ENCODE measurements at regions of chr12 and their contacts with region 1.

Region 1: GRCh38 chr12:94101738-94102660 is 46.4 kb upstream of the PLXNC1 start:
- DNase-seq: peak; percentile 56
- ATAC-seq: peak; percentile 93
- H3K4me3 ChIP-seq: peak overlapping the region; percentile 78
- H3K27ac ChIP-seq: no peak overlapping the region
- H3K4me1 ChIP-seq: no peaks in the 10 kb centered on the region; the same call in 1 of the 2 replicates
- H3K27me3 ChIP-seq: peaks cover 0 to 2% of the 10 kb centered on the region in 2 experiments; a peak in 2 of 4 replicates
- CTCF ChIP-seq: peak; percentile 79 to 97 (median 82); a peak in 5 of 6 replicates
- EP300 ChIP-seq: no peak
- POLR2A ChIP-seq: no peak
- RAD21 ChIP-seq: peak; percentile 93

Region 2: DNA sequence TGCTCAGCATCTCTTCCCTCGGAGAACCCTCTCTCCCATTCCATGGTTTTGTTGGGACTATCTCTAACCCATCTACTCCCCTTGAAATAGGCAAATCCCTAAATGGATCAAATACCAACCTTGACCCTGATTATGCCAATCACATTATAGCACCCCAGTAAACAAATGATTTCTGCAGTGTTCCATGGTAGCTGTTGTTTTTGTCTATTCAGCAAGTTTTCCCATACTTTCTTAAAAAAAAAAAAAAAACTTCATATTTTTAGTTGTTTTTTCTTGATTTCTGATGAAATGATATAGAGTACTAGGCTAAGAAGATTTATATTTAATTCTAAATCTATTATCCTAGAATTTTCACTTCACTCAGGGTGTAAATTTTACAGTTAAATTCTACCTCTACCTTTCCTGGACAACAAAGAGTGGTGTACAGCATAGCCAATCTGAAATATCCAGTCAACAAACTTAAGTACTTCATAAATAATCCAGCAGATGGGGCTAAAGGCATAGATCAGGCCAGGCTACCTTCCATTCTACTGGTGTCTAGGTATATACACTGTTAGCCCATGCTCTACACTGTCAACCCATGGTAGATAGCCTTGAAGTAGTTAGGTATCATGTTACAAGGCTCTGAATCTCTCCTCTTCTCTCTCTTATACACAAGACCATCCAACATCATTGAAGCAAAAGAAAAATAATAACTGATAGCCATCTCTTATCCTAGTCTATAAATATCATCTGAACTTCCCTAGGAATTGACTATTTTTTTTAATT is 1317.0 kb before region 1 on chr12:
- CTCF ChIA-PET with region 1: interaction called, 10 read pairs
- POLR2A ChIA-PET with region 1: no interaction called
- RAD21 ChIA-PET with region 1: interaction called, 5 read pairs
- SMC1A ChIA-PET with region 1: interaction called, 4 read pairs
- in situ Hi-C with region 1: loop called (anchors 10 kb)
- intact Hi-C with region 1: loop called (anchors 5 kb)
- DNase-seq: peak; percentile 70
- ATAC-seq: peak; percentile 99
- H3K4me3 ChIP-seq: no peak overlapping the region
- H3K27ac ChIP-seq: no peak overlapping the region
- H3K4me1 ChIP-seq: peaks cover 2% of the 10 kb centered on the region; the same call in 1 of the 2 replicates
- H3K27me3 ChIP-seq: no peaks in the 10 kb centered on the region
- CTCF ChIP-seq: peak; percentile 51 to 84 (median 57); a peak in 5 of 6 replicates
- EP300 ChIP-seq: no peak
- POLR2A ChIP-seq: no peak
- RAD21 ChIP-seq: peak; percentile 97

Region 3: GRCh38 chr12:93514853-93515252 is 587.1 kb before region 1 on chr12:
- CTCF ChIA-PET with region 1: interaction called, 18 read pairs
- POLR2A ChIA-PET with region 1: no interaction called
- RAD21 ChIA-PET with region 1: interaction called, 3 read pairs
- SMC1A ChIA-PET with region 1: interaction called, 8 read pairs
- in situ Hi-C with region 1: no loop called
- intact Hi-C with region 1: no loop called
- DNase-seq: no peak
- ATAC-seq: no peak
- H3K4me3 ChIP-seq: no peak overlapping the region
- H3K27ac ChIP-seq: no peak overlapping the region
- H3K4me1 ChIP-seq: no peaks in the 10 kb centered on the region
- H3K27me3 ChIP-seq: no peaks in the 10 kb centered on the region
- CTCF ChIP-seq: no peak
- EP300 ChIP-seq: no peak
- POLR2A ChIP-seq: no peak
- RAD21 ChIP-seq: no peak

Region 4: DNA sequence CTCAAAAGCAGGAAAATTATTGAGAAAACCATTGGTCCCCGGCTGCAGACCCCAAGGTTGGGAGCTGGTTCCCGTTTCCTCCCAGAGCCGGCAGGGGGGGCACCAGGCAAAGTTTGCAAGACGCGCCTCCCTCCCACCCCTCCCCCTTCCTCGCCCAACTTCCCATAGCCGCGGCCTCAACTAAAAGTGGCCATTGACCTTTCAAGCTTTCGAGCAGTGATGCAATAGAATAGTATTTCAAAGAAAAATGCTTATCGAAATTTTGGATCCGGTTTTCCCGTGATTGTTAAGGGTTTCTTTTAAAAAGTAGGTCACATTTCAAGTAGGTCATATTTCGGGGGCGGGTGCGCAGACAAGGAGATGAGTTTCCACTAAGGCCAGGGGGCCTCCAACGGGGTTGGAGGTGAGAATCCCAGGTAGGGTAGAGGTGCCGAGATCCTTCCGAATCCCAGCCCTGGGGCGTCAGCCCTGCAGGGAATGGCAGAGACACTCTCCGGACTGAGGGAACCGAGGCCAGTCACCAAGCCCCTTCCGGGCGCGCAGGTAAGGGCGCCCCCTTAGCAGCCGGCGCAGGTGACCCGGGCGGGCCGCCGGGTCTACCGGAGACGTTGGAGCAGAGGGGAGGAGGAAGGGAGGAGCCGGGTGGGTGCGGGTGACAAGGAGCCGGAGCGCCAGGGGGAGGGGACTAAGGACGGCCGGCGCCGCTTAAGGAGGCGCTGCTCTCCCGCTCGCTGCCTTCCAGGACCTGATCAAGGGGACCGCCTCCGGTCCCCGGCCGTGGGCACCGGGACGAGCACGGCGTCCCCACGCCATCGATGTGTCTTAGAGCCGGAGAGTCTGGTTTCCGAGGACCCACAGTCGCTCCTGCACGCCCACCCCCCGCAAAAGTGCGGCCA is 532.1 kb before region 1 on chr12:
- CTCF ChIA-PET with region 1: interaction called, 148 read pairs
- POLR2A ChIA-PET with region 1: interaction called, 6 read pairs
- RAD21 ChIA-PET with region 1: interaction called, 121 read pairs
- SMC1A ChIA-PET with region 1: interaction called, 85 read pairs
- in situ Hi-C with region 1: loop called (anchors 5 kb)
- intact Hi-C with region 1: loop called (anchors 1 kb)
- DNase-seq: no peak
- ATAC-seq: peak; percentile 73
- H3K4me3 ChIP-seq: peak overlapping the region; percentile 81
- H3K27ac ChIP-seq: no peak overlapping the region
- H3K4me1 ChIP-seq: peaks cover 6% of the 10 kb centered on the region; the same call in 1 of the 2 replicates
- H3K27me3 ChIP-seq: peaks cover 11 to 15% of the 10 kb centered on the region in 2 experiments
- CTCF ChIP-seq: peak; percentile 73 to 92 (median 83)
- EP300 ChIP-seq: no peak
- POLR2A ChIP-seq: no peak
- RAD21 ChIP-seq: peak; percentile 89

Region 5: GRCh38 chr12:93773122-93773871 is 328.7 kb before region 1 on chr12:
- CTCF ChIA-PET with region 1: interaction called, 81 read pairs
- POLR2A ChIA-PET with region 1: no interaction called
- RAD21 ChIA-PET with region 1: no interaction called
- SMC1A ChIA-PET with region 1: interaction called, 46 read pairs
- in situ Hi-C with region 1: loop called (anchors 5 kb)
- intact Hi-C with region 1: no loop called
- DNase-seq: no peak
- ATAC-seq: peak; percentile 31; the same call in 2 of the 3 replicates
- H3K4me3 ChIP-seq: no peak overlapping the region
- H3K27ac ChIP-seq: no peak overlapping the region
- H3K4me1 ChIP-seq: no peaks in the 10 kb centered on the region
- H3K27me3 ChIP-seq: no peaks in the 10 kb centered on the region
- CTCF ChIP-seq: no peak
- EP300 ChIP-seq: no peak
- POLR2A ChIP-seq: no peak
- RAD21 ChIP-seq: no peak

Region 6: DNA sequence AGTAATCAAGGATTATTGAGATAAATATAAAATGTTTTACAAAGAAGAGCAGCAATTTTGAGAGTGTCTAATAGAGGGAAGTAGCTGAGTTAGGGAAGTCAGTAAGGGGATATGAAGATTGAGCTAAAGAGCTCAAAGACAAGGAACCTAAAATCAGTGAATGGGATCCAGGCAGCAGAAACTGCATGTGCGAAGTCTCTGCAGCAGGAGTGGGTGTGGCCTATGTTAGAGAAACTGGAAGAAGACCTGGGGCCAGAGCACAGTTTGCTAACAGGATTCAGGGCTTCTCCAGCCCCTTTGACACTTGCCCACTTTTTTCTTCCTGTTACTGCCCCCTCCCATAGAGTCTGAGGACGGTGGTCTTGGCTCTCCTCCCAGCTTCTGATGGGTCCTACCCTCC is 10.1 kb after region 1 on chr12:
- CTCF ChIA-PET with region 1: interaction called, 27 read pairs
- POLR2A ChIA-PET with region 1: no interaction called
- RAD21 ChIA-PET with region 1: interaction called, 18 read pairs
- SMC1A ChIA-PET with region 1: interaction called, 14 read pairs
- in situ Hi-C with region 1: no loop called
- intact Hi-C with region 1: no loop called
- DNase-seq: no peak
- ATAC-seq: 0 out of 3 replicates have a peak, but pooled peaks have one; percentile 27
- H3K4me3 ChIP-seq: no peak overlapping the region
- H3K27ac ChIP-seq: no peak overlapping the region
- H3K4me1 ChIP-seq: no peaks in the 10 kb centered on the region
- H3K27me3 ChIP-seq: 0 out of 4 replicates have a peak, but pooled peaks cover 0 to 2% of the 10 kb centered on the region in 2 experiments
- CTCF ChIP-seq: no peak
- EP300 ChIP-seq: no peak
- POLR2A ChIP-seq: no peak
- RAD21 ChIP-seq: no peak

Region 7: GRCh38 chr12:94262228-94263010 is 160.4 kb after region 1 on chr12:
- CTCF ChIA-PET with region 1: no interaction called
- POLR2A ChIA-PET with region 1: no interaction called
- RAD21 ChIA-PET with region 1: no interaction called
- SMC1A ChIA-PET with region 1: no interaction called
- in situ Hi-C with region 1: no loop called
- intact Hi-C with region 1: no loop called
- DNase-seq: no peak
- ATAC-seq: peak; percentile 80
- H3K4me3 ChIP-seq: peak overlapping the region; percentile 35; the same call in 1 of the 2 replicates
- H3K27ac ChIP-seq: peak overlapping the region; percentile 88
- H3K4me1 ChIP-seq: peaks cover 59% of the 10 kb centered on the region
- H3K27me3 ChIP-seq: no peaks in the 10 kb centered on the region
- CTCF ChIP-seq: no peak
- EP300 ChIP-seq: peak in 1 of 2 experiments; percentile 11; a peak in 1 of 4 replicates
- POLR2A ChIP-seq: peak; percentile 76
- RAD21 ChIP-seq: no peak; the same call in 1 of the 2 replicates

Region 8: DNA sequence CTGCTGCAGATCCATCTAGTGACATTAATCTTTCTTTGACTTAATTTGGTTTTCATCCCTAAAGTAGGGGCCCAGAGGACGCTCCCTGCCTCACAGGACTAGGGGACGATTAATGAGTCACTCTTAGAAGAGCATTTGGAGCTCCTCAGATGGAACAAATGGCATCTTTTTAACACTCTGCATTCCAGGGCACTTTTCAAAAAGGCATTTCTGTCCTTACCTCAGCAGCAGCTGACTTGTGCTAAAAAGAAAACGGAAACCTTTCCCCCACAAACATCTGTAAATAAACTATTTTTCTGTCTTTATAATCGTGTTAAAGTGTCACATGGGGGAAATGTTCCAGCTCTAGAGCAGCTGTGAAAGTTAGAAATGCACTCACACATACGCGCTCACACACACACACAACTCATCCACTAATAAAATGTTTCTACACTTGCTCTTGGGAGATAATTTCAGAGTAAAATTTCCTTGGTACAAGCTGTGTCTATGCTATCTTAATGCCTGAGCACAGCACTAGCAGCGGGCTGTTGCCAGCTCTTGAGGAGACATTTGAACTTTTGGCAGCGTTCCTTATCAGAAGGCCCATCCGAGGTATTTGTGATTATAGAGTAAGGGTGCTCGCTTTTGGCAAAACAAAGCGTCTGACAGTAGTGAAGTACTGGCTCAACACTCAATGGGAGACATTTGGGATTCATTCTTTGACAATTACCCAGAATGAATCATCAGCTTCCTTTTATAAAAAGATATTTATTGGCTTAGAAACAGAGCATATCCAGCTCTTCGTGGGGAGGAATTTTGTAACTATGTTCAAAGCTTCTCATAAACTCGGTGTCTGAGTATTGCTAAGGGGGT is 187.7 kb after region 1 on chr12:
- CTCF ChIA-PET with region 1: no interaction called
- POLR2A ChIA-PET with region 1: no interaction called
- RAD21 ChIA-PET with region 1: no interaction called
- SMC1A ChIA-PET with region 1: no interaction called
- in situ Hi-C with region 1: no loop called
- intact Hi-C with region 1: no loop called
- DNase-seq: no peak
- ATAC-seq: no peak
- H3K4me3 ChIP-seq: no peak overlapping the region
- H3K27ac ChIP-seq: no peak overlapping the region
- H3K4me1 ChIP-seq: no peaks in the 10 kb centered on the region
- H3K27me3 ChIP-seq: no peaks in the 10 kb centered on the region
- CTCF ChIP-seq: no peak
- EP300 ChIP-seq: no peak
- POLR2A ChIP-seq: no peak
- RAD21 ChIP-seq: no peak

Region 9: GRCh38 chr12:94532490-94533422 is 430.8 kb after region 1 on chr12:
- CTCF ChIA-PET with region 1: interaction called, 9 read pairs
- POLR2A ChIA-PET with region 1: no interaction called
- RAD21 ChIA-PET with region 1: interaction called, 10 read pairs
- SMC1A ChIA-PET with region 1: interaction called, 9 read pairs
- in situ Hi-C with region 1: no loop called
- intact Hi-C with region 1: no loop called
- DNase-seq: peak; percentile 36
- ATAC-seq: peak; percentile 99
- H3K4me3 ChIP-seq: no peak overlapping the region
- H3K27ac ChIP-seq: no peak overlapping the region
- H3K4me1 ChIP-seq: no peaks in the 10 kb centered on the region
- H3K27me3 ChIP-seq: no peaks in the 10 kb centered on the region; a peak in 1 of 4 replicates
- CTCF ChIP-seq: peak; percentile 83 to 89 (median 86)
- EP300 ChIP-seq: no peak
- POLR2A ChIP-seq: no peak
- RAD21 ChIP-seq: peak; percentile 99

Region 10: GRCh38 chr12:94615284-94616181 is 513.5 kb after region 1 on chr12:
- CTCF ChIA-PET with region 1: no interaction called
- POLR2A ChIA-PET with region 1: no interaction called
- RAD21 ChIA-PET with region 1: no interaction called
- SMC1A ChIA-PET with region 1: no interaction called
- in situ Hi-C with region 1: no loop called
- intact Hi-C with region 1: no loop called
- DNase-seq: no peak
- ATAC-seq: no peak
- H3K4me3 ChIP-seq: no peak overlapping the region
- H3K27ac ChIP-seq: no peak overlapping the region
- H3K4me1 ChIP-seq: no peaks in the 10 kb centered on the region
- H3K27me3 ChIP-seq: no peaks in the 10 kb centered on the region
- CTCF ChIP-seq: no peak
- EP300 ChIP-seq: no peak
- POLR2A ChIP-seq: no peak
- RAD21 ChIP-seq: no peak